K562 (cell line): ENCODE measurements at regions of chr1 and their contacts with region 1.

Region 1: DNA sequence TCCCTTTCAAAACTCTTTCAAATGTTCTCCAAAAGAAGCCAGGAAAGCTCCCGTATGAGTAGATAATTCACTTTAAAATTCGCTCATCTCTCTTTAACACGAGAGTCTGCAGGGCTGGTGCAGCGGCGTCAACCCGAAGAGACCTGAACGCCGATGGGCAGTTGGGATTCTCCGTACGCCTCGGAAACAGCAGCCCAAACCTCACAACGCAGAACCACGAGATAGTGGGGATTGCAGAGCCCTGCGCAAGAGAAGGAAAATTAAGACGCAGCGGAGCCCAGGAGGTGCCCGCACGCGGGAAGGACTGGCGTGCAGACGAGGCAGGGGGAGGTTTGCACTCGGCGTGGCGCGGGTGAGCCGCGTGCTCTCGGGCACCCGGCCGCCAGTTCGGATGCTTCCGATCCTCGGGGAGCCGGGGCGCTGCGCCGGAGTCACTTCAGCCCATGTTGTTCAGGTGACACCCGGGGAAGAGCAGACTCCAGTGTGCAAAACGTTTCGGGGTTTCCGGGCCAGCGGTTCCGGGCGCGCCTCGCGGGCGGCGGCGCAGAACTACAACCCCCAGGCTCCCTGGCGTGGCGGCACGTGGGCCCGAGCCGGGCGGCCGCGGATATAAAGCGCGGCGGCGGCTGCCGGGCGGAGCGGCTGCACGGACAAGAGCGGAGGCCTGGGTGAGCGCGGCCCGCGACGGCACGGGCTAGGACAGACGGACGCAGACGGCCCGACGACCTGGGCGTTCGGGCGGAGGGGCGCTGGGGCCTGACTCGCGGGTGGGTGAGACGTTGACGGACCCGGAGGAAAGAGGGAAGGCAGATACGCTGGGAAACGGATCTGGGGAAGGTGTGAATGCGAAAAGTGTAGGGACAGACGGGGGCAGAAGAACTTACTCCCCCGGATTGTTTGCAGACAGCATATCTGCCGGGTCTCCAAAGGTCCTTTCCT is at the start of gene NPL:
- DNase-seq: peak; percentile 81 to 89 (median 82)
- ATAC-seq: peak; percentile 88
- H3K4me3 ChIP-seq: peak within 1 kb of the TSS; percentile 38
- H3K27ac ChIP-seq: peak within 1 kb of the TSS; percentile 61
- H3K4me1 ChIP-seq: peaks cover 23 to 41% of the 10 kb centered on the region in 2 experiments
- H3K27me3 ChIP-seq: no peaks in the 10 kb centered on the region
- CTCF ChIP-seq: no peak
- EP300 ChIP-seq: no peak
- POLR2A ChIP-seq: peak; percentile 89
- RAD21 ChIP-seq: no peak
- polyA plus RNA-seq, gene NPL: 20.8 to 22.3 TPM

Region 2: GRCh38 chr1:182446033-182446669 is 343.3 kb before region 1 on chr1:
- CTCF ChIA-PET with region 1: interaction called, 14 read pairs
- POLR2A ChIA-PET with region 1: interaction called, 3 read pairs
- in situ Hi-C with region 1: loop called (anchors 5 kb)
- intact Hi-C with region 1: loop called (anchors 1 kb)
- DNase-seq: peak; percentile 63 to 77 (median 69)
- ATAC-seq: peak; percentile 89
- H3K4me3 ChIP-seq: no peak overlapping the region
- H3K27ac ChIP-seq: no peak overlapping the region
- H3K4me1 ChIP-seq: no peaks in the 10 kb centered on the region; a peak in 1 of 5 replicates
- H3K27me3 ChIP-seq: peaks cover 0 to 6% of the 10 kb centered on the region in 2 experiments; a peak in 3 of 5 replicates
- CTCF ChIP-seq: peak; percentile 74 to 89 (median 81)
- EP300 ChIP-seq: no peak
- POLR2A ChIP-seq: no peak
- RAD21 ChIP-seq: peak; percentile 90 to 98

Region 3: GRCh38 chr1:182595641-182596240 is 193.7 kb before region 1 on chr1:
- CTCF ChIA-PET with region 1: interaction called, 53 read pairs
- POLR2A ChIA-PET with region 1: interaction called, 4 read pairs
- in situ Hi-C with region 1: loop called (anchors 5 kb)
- intact Hi-C with region 1: no loop called
- DNase-seq: peak; percentile 72 to 76 (median 73)
- ATAC-seq: peak; percentile 51; the same call in 2 of the 3 replicates
- H3K4me3 ChIP-seq: no peak overlapping the region
- H3K27ac ChIP-seq: no peak overlapping the region
- H3K4me1 ChIP-seq: 0 out of 5 replicates have a peak, but pooled peaks cover 0 to 3% of the 10 kb centered on the region in 2 experiments
- H3K27me3 ChIP-seq: peaks cover 0 to 8% of the 10 kb centered on the region in 2 experiments; a peak in 1 of 5 replicates
- CTCF ChIP-seq: peak; percentile 82 to 93 (median 90)
- EP300 ChIP-seq: peak; percentile 17; the same call in 1 of the 2 replicates
- POLR2A ChIP-seq: no peak
- RAD21 ChIP-seq: peak; percentile 81

Region 4: DNA sequence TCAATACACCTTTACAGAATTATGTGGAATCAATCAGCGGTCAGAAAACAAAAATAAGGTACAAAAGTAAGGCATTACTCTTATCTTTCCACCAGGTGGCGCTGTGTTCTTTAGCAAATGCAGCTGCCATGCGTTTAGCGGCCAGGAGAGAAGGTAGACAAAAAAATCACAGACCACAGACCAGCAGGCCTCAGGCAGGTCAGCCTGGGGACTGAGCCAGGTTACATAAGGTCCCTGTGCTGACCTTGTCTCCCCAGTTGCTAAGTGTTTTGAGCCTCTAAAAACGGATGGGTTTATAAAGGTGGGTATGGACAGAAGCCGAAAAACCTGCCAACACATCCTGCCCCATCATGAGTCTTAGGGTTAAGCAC is 188.0 kb before region 1 on chr1:
- CTCF ChIA-PET with region 1: interaction called, 53 read pairs
- POLR2A ChIA-PET with region 1: interaction called, 6 read pairs
- in situ Hi-C with region 1: loop called (anchors 5 kb)
- intact Hi-C with region 1: no loop called
- DNase-seq: peak; percentile 69 to 90 (median 75)
- ATAC-seq: peak; percentile 48
- H3K4me3 ChIP-seq: no peak overlapping the region
- H3K27ac ChIP-seq: no peak overlapping the region
- H3K4me1 ChIP-seq: peaks cover 9 to 13% of the 10 kb centered on the region in 2 experiments; a peak in 4 of 5 replicates
- H3K27me3 ChIP-seq: peaks cover 2 to 21% of the 10 kb centered on the region in 2 experiments; a peak in 3 of 5 replicates
- CTCF ChIP-seq: peak; percentile 89 to 96 (median 90)
- EP300 ChIP-seq: no peak
- POLR2A ChIP-seq: no peak
- RAD21 ChIP-seq: peak; percentile 98 to 99

Region 5: DNA sequence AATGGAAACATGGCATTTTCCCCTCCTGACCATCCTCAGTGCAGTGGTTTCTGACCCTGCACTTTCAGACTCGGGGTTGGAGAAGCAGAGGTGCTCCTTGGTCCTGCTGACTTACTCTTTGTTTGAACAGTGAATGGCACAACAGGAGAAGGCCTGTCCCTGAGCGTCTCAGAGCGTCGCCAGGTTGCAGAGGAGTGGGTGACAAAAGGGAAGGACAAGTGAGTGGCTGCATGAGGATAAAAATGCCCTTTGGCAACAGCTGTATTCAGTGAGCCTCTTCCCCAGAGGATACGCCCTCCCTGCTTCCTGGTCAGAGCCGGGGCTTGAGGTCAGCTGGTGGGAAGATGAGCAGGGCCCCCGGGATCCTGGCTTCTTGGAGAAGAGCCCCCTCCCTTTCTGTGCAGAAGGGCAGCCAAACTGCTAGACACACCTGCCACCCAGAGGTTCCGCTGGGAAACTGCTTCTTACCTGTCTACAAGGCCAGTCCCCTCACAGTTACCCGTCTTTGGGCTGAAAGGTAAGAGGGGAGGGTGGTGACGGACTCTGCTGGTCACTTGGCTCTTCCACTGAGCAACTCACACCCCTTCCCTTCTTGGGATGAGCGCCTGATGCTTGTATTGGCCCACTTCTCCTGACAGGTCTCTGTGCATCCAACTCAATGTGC is 16.7 kb after region 1 on chr1:
- CTCF ChIA-PET with region 1: no interaction called
- POLR2A ChIA-PET with region 1: interaction called, 4 read pairs
- in situ Hi-C with region 1: no loop called
- intact Hi-C with region 1: loop called (anchors 1 kb)
- DNase-seq: peak; percentile 47 to 68 (median 54)
- ATAC-seq: peak; percentile 94
- H3K4me3 ChIP-seq: no peak overlapping the region
- H3K27ac ChIP-seq: no peak overlapping the region
- H3K4me1 ChIP-seq: no peaks in the 10 kb centered on the region
- H3K27me3 ChIP-seq: no peaks in the 10 kb centered on the region
- CTCF ChIP-seq: peak; percentile 74 to 78 (median 77)
- EP300 ChIP-seq: no peak
- POLR2A ChIP-seq: no peak
- RAD21 ChIP-seq: peak in 1 of 2 experiments; percentile 81; a peak in 3 of 4 replicates

Region 6: GRCh38 chr1:182839209-182840065 is 50.0 kb after region 1 on chr1 and contains the start of gene DHX9:
- CTCF ChIA-PET with region 1: no interaction called
- POLR2A ChIA-PET with region 1: interaction called, 8 read pairs
- in situ Hi-C with region 1: no loop called
- intact Hi-C with region 1: loop called (anchors 1 kb)
- DNase-seq: peak; percentile 96 to 99 (median 99)
- ATAC-seq: peak; percentile 90
- H3K4me3 ChIP-seq: peak within 1 kb of the TSS; percentile 77
- H3K27ac ChIP-seq: peak within 1 kb of the TSS; percentile 98
- H3K4me1 ChIP-seq: peaks cover 11 to 12% of the 10 kb centered on the region in 2 experiments
- H3K27me3 ChIP-seq: no peaks in the 10 kb centered on the region
- CTCF ChIP-seq: peak in 2 of 3 experiments; percentile 7 to 48; a peak in 2 of 6 replicates
- EP300 ChIP-seq: peak; percentile 82
- POLR2A ChIP-seq: peak; percentile 99
- RAD21 ChIP-seq: peak in 1 of 2 experiments; percentile 10; a peak in 1 of 4 replicates
- polyA plus RNA-seq, gene DHX9: 100 to 246 TPM